T-cell (primary cell): ENCODE measurements at regions of chr1 and their contacts with region 1.

Region 1: DNA sequence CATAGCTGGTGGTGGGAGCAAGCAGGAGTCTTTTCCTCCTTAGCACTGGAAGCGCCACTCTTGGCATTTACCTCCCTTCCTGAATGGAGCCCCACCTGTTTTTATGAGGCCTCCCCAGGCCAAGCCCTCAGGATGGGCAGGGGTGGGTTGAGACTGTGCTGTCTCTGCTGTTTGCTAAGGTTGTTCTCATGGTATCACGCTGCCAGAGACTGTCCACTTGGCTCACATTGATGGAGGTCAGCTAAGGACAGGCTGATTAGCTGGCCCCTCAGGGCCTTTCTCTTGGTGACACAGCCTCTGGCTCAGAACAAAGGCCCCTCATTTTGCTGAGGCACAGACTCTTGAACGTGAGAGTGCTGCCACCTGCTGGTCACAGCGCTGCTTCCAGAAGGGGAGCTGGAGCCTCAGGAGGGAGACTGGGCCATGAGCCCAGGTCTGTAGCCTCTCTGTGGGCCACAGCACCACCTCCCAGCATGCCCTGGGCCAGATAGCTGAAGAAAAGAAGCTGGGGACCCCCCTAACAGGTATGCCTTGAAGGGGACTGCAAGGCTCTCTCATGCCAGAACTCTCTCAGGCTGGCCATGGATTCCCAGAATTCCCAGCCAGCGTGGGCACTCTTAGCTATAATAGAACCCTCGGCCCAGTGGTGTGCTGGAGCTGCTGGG is 85.6 kb downstream of the CD58 start:
- DNase-seq: peak; percentile 51 to 93 (median 83)
- ATAC-seq: peak; percentile 81 to 95 (median 94)
- H3K4me3 ChIP-seq: no peak overlapping the region
- H3K4me3 Mint-ChIP-seq: no peak overlapping the region
- H3K27ac ChIP-seq: no peak overlapping the region
- H3K27ac Mint-ChIP-seq: no peak overlapping the region
- H3K4me1 ChIP-seq: peaks cover 0 to 4% of the 10 kb centered on the region in 2 experiments
- H3K4me1 Mint-ChIP-seq: no peaks in the 10 kb centered on the region
- H3K27me3 ChIP-seq: no peaks in the 10 kb centered on the region
- H3K27me3 Mint-ChIP-seq: no peaks in the 10 kb centered on the region

Region 2: GRCh38 chr1:116067566-116067890 is 417.7 kb before region 1 on chr1:
- CTCF ChIA-PET with region 1: no interaction called
- POLR2A ChIA-PET with region 1: no interaction called
- DNase-seq: no peak
- ATAC-seq: no peak
- H3K4me3 ChIP-seq: no peak overlapping the region
- H3K4me3 Mint-ChIP-seq: no peak overlapping the region
- H3K27ac ChIP-seq: no peak overlapping the region
- H3K27ac Mint-ChIP-seq: no peak overlapping the region
- H3K4me1 ChIP-seq: no peaks in the 10 kb centered on the region
- H3K4me1 Mint-ChIP-seq: no peaks in the 10 kb centered on the region
- H3K27me3 ChIP-seq: no peaks in the 10 kb centered on the region
- H3K27me3 Mint-ChIP-seq: peaks cover 13 to 34% of the 10 kb centered on the region in 2 donors

Region 3: GRCh38 chr1:116151739-116152576 is 333.2 kb before region 1 on chr1:
- CTCF ChIA-PET with region 1: interaction called, 13 to 27 read pairs
- POLR2A ChIA-PET with region 1: no interaction called
- DNase-seq: peak; percentile 55 to 92 (median 70)
- ATAC-seq: peak; percentile 86 to 92 (median 88)
- H3K4me3 ChIP-seq: peak overlapping the region; percentile 42 to 58
- H3K4me3 Mint-ChIP-seq: peak overlapping the region; percentile 63 to 75 (median 70)
- H3K27ac ChIP-seq: peak overlapping the region; percentile 28
- H3K27ac Mint-ChIP-seq: peak overlapping the region; percentile 85 to 88
- H3K4me1 ChIP-seq: peaks cover 17 to 24% of the 10 kb centered on the region in 2 experiments
- H3K4me1 Mint-ChIP-seq: peaks cover 21 to 32% (median 23%) of the 10 kb centered on the region in 3 donors
- H3K27me3 ChIP-seq: peaks cover 0 to 3% of the 10 kb centered on the region in 2 experiments
- H3K27me3 Mint-ChIP-seq: peaks cover 0 to 3% of the 10 kb centered on the region in 2 donors

Region 4: GRCh38 chr1:116232989-116233514 is 252.2 kb before region 1 on chr1:
- CTCF ChIA-PET with region 1: interaction called, 17 to 43 read pairs
- POLR2A ChIA-PET with region 1: no interaction called
- DNase-seq: peak in 30 of 35 experiments; percentile 5 to 63 (median 16)
- ATAC-seq: peak; percentile 82 to 94 (median 92)
- H3K4me3 ChIP-seq: no peak overlapping the region
- H3K4me3 Mint-ChIP-seq: peak overlapping the region in 1 of 3 donors; percentile 19
- H3K27ac ChIP-seq: no peak overlapping the region
- H3K27ac Mint-ChIP-seq: peak overlapping the region; percentile 50 to 78
- H3K4me1 ChIP-seq: peaks cover 2 to 11% of the 10 kb centered on the region in 2 experiments
- H3K4me1 Mint-ChIP-seq: peaks cover 16 to 23% (median 20%) of the 10 kb centered on the region in 3 donors
- H3K27me3 ChIP-seq: no peaks in the 10 kb centered on the region
- H3K27me3 Mint-ChIP-seq: no peaks in the 10 kb centered on the region

Region 5: DNA sequence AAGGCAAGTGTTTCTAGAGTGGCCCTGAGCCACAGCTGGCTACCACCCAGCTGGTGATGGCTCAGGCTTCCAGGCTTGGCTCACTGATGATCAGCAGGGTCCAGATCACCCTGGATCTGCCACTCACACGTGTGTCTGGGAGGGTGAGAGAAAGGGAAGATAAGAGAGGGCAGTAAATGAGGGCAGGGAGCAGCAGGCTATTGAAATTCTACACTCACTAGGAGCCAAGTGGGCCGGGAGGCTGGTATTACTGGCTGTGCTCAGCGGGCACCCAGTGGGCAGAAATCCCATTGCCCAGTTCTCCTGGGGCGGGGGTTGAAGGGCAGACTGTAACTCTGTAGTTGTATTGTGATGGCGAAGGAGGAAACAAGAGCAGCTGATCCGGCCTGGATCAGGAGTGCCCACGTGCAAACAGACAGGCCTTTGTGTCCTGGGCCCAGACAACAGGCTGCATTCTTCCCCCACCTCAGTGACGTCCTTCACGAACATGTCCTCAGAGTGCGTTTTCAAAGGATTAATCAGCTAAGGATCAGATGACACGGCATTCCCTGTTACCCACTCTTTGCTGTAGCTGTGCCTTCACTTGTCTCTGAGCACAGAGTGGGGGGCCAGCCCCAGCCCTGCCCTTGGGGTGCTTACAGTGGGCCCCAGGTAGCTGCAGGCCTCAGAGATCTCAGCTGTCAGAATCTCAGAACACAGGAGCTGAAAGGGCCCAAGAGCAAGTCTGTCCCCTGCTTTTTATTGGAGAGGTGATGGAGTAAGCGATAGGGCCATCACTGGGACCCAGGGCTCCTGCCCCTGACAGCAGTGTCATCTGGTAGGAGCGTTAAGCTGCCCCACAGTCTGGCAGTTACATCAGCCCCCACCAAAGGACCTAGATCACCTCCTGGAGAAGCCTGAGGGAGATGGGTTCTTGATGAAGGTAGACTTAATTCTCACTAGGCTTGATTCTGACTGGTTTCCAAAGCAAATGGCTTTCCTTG is 51.6 kb before region 1 on chr1:
- CTCF ChIA-PET with region 1: no interaction called
- POLR2A ChIA-PET with region 1: no interaction called
- DNase-seq: no peak
- ATAC-seq: peak in 2 of 4 experiments; percentile 22 to 24
- H3K4me3 ChIP-seq: no peak overlapping the region
- H3K4me3 Mint-ChIP-seq: no peak overlapping the region
- H3K27ac ChIP-seq: no peak overlapping the region
- H3K27ac Mint-ChIP-seq: no peak overlapping the region
- H3K4me1 ChIP-seq: no peaks in the 10 kb centered on the region
- H3K4me1 Mint-ChIP-seq: no peaks in the 10 kb centered on the region
- H3K27me3 ChIP-seq: no peaks in the 10 kb centered on the region
- H3K27me3 Mint-ChIP-seq: no peaks in the 10 kb centered on the region

Region 6: GRCh38 chr1:116498789-116499628 is 13.8 kb after region 1 on chr1:
- CTCF ChIA-PET with region 1: interaction called, 14 to 40 read pairs
- POLR2A ChIA-PET with region 1: no interaction called
- DNase-seq: peak in 20 of 35 experiments; percentile 16 to 74 (median 30)
- ATAC-seq: peak; percentile 75 to 83 (median 78)
- H3K4me3 ChIP-seq: no peak overlapping the region
- H3K4me3 Mint-ChIP-seq: no peak overlapping the region
- H3K27ac ChIP-seq: no peak overlapping the region
- H3K27ac Mint-ChIP-seq: peak overlapping the region in 1 of 2 donors; percentile 4
- H3K4me1 ChIP-seq: peaks cover 9 to 29% of the 10 kb centered on the region in 2 experiments
- H3K4me1 Mint-ChIP-seq: peaks cover 23 to 39% (median 34%) of the 10 kb centered on the region in 3 donors
- H3K27me3 ChIP-seq: no peaks in the 10 kb centered on the region
- H3K27me3 Mint-ChIP-seq: no peaks in the 10 kb centered on the region

Region 7: DNA sequence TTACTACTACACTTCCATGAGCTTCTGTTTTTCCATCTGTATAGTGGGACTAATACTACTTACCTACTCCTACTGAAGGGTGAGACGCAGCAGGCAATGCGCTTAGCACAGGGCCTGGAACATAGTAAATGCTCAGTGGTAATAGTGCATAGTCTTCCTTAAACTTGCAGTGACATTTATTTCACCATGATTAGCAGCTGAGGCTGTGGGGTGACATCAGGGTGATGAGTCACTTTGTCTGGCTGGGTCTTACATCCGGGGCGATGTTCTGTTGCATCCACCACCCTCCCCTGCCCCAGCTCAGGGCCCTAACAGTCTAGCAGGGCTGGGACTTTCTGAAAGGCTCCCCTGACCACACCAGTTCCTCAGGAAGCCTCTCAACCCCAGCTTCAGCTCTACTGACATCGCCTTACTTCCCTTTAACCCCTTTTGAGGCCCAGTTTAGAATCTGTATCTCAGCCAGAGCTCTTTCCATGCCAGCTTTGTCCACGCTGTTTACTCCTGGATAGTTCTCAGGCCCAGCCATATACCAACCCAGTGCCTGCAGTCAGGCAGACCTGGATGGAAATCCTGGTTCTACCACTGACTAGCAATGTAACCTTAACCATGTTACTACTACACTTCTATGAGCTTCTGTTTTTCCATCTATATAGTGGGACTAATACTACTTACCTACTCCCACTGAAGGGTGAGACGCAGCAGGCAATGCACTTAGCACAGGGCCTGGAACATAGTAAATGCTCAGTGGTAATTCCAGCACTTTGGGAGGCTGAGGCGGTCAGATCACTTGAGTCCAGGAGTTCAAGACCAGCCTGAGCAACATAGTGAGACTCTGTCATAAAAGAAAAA is 19.3 kb after region 1 on chr1:
- CTCF ChIA-PET with region 1: interaction called, 14 to 40 read pairs
- POLR2A ChIA-PET with region 1: no interaction called
- DNase-seq: peak; percentile 59 to 93 (median 84)
- ATAC-seq: peak; percentile 98 to 99 (median 99)
- H3K4me3 ChIP-seq: no peak overlapping the region
- H3K4me3 Mint-ChIP-seq: peak overlapping the region in 2 of 3 donors; percentile 34 to 55
- H3K27ac ChIP-seq: peak overlapping the region; percentile 81
- H3K27ac Mint-ChIP-seq: peak overlapping the region; percentile 90 to 93
- H3K4me1 ChIP-seq: peaks cover 20 to 51% of the 10 kb centered on the region in 2 experiments
- H3K4me1 Mint-ChIP-seq: peaks cover 49 to 70% (median 59%) of the 10 kb centered on the region in 3 donors
- H3K27me3 ChIP-seq: no peaks in the 10 kb centered on the region
- H3K27me3 Mint-ChIP-seq: no peaks in the 10 kb centered on the region